Activated CD4-positive, alpha-beta T cell treated with anti-CD3 and anti-CD28 coated beads, Interleukin-2, amount 10 ng/mL, durations not matched to agents 24 days and 14 days (primary cell): ENCODE measurements at regions of chr18 and their contacts with region 1.

Region 1: DNA sequence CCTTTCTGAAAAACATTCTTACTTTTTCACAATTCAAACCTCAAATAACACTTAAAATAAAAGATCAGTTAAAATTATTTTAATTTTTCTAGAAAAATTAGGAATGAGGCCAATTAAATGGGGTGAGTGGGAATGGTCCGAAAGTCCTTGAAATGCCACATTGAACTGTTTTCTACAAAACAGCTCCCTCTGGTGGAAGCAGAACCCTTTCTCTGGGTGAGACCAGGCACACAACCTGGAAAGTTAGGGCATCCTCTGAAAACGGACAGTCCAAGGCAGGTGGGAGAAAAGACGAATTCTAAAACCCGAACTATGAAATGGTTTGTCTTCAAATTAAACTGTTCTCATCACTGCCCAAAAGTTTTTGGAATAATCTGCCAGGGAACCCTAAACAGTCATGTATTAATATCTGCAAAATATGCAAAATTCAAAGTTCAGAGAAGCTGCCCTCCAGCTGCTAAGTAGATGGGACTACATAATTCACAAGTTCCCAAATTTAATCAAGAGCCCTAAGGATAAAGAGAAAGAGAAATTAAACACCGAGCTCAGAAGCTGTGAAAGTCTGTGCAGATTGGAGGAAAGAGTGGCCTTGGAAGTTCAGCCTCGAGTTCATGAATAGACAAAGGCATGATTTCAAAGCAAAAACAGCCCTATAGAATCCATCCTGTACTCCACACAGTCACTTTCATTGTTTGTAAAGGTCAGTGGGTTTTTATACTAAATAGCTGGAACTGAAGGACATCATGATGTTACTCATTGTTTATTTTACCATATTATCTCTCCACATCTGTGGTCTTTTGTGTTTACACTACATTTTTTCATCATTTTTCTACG is 108.3 kb downstream of the PIEZO2 start:
- DNase-seq: peak; percentile 80
- H3K4me3 Mint-ChIP-seq: no peak overlapping the region
- H3K27ac Mint-ChIP-seq: no peak overlapping the region
- H3K4me1 Mint-ChIP-seq: no peaks in the 10 kb centered on the region
- H3K27me3 Mint-ChIP-seq: peaks cover 16% of the 10 kb centered on the region

Region 2: DNA sequence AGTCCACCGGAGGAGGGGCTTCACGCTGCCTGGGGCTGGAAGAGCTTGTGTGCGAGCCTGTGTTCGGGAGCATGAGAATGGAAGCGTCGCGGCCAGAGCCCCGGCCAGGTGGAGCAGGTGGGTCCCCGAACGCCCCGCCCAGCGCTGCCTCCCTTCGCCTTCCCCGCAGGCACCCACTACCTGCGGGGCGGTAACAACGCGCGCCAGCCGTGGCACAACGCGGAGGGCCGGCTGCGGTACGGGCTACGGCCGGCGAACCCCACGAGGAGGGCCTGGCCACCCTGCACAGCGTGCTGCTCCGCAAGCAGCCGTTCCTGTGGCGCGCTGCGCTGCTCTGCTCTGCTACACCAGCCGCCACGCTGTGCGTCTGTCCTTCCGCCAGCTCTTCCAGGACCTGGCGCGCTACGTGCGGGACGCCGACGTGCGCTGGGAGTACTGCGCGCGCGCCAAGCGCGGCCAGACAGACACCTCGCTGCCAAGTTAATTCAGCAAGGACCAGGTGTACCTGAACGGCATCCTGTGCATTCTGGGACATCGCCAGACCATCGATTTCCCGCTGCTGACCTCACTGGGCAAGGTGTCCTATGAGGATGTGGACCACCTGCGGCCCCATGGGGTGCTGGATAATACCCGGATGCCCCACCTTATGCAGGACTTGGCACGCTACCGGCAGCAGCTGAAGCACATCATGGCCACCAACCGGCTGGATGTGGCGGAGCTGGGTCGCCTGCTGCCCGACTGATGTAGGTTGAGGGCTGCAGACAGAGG is 314.7 kb before region 1 on chr18:
- intact Hi-C with region 1: no loop called
- DNase-seq: no peak
- H3K4me3 Mint-ChIP-seq: no peak overlapping the region
- H3K27ac Mint-ChIP-seq: no peak overlapping the region
- H3K4me1 Mint-ChIP-seq: no peaks in the 10 kb centered on the region
- H3K27me3 Mint-ChIP-seq: no peaks in the 10 kb centered on the region

Region 3: GRCh38 chr18:10787293-10787901 is 253.6 kb before region 1 on chr18:
- intact Hi-C with region 1: loop called (anchors 1 kb)
- DNase-seq: peak; percentile 96
- H3K4me3 Mint-ChIP-seq: no peak overlapping the region
- H3K27ac Mint-ChIP-seq: no peak overlapping the region
- H3K4me1 Mint-ChIP-seq: peaks cover 5% of the 10 kb centered on the region
- H3K27me3 Mint-ChIP-seq: peaks cover 55% of the 10 kb centered on the region